ENCODE measurements at regions of chr2 and their contacts with region 1.

Region 1: DNA sequence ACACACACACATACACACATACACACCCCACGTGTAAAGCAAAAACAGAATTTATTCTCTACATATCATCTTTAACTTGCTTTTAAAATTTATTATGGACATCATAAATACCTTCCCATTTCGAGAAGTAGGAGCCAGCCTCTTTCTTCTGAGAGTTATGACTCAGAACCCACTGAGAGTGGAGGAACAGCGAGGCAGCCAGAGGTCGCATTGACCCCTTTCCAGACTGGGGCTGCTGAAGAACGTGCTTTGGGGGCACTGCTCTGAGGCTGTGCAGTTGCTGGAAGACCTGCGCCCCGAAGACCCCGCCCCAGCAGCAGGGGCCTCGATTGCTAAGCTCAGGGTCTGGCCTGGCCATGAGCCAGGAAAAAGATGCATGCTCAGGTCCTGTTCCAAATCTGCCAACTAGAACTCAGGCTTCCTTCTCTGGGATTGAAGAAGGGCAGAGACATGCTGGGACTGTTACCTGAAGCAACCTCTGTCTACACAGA is 133.8 kb upstream of the TWIST2 start:
- DNase-seq: no peak

Region 2: DNA sequence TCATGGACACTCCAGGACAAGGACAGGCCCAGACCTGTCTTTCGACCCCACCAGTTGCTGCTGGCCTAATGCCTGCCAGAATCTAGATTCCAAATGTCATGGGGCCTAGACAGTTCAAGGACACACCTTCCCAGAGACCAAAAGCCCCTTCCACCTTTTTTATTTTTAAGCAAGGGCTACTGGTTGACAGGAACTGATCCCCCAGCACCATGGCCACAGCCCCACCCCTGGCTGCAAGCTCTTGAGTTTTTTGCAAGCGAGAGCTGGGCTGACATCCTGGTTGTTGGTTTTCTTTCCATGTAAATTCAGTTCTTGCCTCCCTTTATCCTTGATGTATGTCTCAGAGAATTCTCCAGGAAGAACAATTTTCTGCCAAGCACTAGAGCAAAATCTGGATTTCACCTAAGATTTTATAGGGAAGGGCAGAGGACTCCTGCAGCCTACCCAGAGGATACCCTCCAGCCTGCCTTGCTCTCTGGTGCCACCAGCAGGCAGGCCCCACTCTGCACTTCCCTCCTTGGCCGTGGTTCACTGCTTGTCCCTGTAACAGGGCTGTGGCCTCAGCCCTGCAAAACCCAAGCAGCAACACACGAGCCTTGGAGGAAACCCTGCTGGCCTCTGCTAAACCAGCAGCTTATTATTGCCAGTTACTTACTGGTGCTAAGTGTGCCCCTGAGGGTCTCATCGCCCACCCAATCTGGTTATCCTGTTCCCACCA is 231.5 kb after region 1 on chr2:
- intact Hi-C with region 1: loop called in 1 of 2 experiments (anchors 10 kb)
- DNase-seq: peak; percentile 84

Region 3: DNA sequence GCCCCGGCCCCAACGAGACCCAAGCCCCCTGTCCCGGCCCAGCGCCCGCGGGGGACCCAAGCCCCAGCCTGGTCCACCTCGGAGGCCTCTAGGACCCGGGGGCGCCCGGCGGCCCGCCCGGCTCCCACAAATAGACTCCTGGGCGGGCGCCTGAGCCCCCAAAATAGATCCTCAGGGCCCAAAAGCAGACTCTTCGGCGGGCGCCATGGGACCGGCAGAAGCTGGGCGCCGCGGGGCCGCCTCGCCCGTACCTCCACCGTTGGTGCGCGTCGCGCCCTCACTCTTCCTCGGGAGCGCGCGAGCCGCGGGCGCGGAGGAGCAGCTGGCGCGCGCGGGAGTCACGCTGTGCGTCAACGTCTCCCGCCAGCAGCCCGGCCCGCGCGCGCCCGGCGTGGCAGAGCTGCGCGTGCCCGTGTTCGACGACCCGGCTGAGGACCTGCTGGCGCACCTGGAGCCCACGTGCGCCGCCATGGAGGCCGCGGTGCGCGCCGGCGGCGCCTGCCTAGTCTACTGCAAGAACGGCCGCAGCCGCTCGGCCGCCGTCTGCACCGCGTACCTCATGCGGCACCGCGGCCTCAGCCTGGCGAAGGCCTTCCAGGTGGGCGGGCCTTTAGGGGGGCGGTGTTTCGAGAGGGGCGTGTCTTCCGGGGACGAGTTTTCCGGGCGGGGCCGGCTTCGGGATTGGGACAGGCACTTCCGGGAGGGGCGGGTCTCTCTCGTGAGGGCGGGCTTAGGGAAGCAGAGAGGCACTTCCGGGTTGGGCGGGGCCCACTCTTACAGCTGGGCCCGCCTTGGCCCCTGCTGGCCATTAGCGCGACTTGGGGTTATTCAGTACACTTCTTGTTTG is 1846.6 kb after region 1 on chr2:
- intact Hi-C with region 1: loop called in 1 of 2 experiments (anchors 5 kb)
- DNase-seq: peak; percentile 100